Mammary epithelial cell (primary cell): ENCODE measurements at regions of chr2 and their contacts with region 1.

Region 1: DNA sequence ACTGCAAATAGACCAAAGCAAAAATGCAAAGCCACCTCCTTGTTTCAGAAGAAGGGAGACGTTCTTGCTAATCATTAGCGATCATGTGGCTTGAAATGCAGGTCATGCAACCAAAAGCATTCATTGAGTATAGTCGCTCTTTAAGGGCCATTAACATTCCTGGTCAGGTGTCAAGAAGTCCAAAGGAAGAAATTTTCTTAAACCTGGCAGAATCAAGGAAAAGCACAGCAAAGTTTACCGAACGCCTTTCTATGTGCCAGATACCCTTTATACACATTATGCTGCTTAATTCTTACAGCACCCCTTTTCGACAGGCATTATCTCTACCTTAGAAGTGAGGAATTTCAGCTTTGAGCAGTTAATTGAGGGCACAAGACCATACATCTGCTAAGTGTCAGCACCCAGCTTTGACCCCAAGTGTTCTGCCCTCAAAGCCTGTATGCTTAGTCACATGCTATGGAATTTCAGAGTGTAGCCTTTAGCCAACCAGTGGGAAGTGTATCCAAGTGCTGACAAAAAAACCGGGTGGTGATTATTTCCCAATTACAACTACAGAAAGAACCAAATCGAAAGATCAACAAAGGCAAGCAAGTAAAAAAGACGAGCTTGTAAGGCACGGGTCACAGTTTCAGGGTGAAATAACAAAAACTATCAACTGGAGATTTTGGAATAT is 70.8 kb downstream of the EPHA4 start:
- DNase-seq: no peak
- H3K4me3 ChIP-seq: no peak overlapping the region
- H3K27ac ChIP-seq: no peak overlapping the region
- H3K4me1 ChIP-seq: peaks cover 13% of the 10 kb centered on the region
- H3K27me3 ChIP-seq: no peaks in the 10 kb centered on the region
- CTCF ChIP-seq: no peak

Region 2: DNA sequence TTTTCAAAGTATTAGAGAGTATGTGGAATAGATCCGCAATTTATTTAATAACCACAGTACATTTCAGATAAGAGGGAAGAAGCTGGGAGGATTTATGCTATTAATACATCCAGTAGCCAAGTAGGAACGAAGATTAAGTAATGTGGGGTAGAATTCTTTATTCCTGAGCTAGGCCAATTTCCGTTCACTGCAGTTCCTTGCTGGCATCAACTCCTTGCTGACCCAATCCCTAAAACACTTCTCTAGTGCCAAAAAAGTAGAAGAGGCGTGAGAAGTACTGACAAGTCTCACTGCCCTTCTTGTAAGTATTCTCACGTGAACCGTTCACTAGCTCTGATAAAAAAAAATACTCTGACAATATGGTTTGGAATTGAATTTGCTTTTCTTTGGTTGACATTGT is 140.6 kb before region 1 on chr2:
- CTCF ChIA-PET with region 1: no interaction called
- dilution Hi-C with region 1: no loop called
- in situ Hi-C with region 1: no loop called
- intact Hi-C with region 1: no loop called
- DNase-seq: no peak
- H3K4me3 ChIP-seq: no peak overlapping the region
- H3K27ac ChIP-seq: no peak overlapping the region
- H3K4me1 ChIP-seq: no peaks in the 10 kb centered on the region
- H3K27me3 ChIP-seq: peaks cover 3% of the 10 kb centered on the region
- CTCF ChIP-seq: no peak

Region 3: DNA sequence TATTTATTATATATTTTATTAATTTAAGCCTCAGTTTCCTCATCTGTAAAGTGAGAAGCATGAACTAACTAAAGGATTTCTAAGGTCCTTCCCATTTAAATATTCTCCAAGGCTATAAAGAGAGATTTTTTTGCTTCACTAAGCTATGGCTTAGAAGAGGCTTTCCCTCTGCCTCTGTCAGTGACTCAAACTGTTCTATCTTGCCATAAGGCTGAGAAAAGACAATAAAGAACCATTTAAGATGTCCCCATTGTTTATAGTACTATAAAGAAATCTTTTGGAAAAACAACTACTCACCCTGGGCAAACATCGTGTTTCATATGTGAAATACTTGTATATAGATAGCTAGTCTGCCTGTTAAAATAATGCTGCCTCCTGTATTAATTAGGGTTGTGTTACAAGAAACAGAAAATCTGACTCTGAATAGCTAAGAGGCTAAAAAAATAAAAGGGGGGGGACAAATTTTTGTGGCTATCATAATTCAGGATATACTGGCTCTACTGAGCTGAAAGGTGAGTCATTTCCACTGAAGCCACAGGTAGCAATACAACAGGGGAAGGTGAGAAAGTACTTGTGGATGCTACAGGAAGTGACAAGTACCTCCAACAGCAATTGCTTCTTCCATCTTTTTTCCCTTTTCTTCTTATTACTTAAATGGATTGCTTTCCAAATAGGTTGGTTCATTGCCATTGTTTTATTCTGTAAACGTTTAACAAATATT is 45.3 kb after region 1 on chr2:
- CTCF ChIA-PET with region 1: interaction called, 16 read pairs
- dilution Hi-C with region 1: no loop called
- in situ Hi-C with region 1: no loop called
- intact Hi-C with region 1: no loop called
- DNase-seq: peak; percentile 79
- H3K4me3 ChIP-seq: no peak overlapping the region
- H3K27ac ChIP-seq: peak overlapping the region; percentile 3
- H3K4me1 ChIP-seq: peaks cover 19% of the 10 kb centered on the region
- H3K27me3 ChIP-seq: no peaks in the 10 kb centered on the region
- CTCF ChIP-seq: no peak